ENCODE measurements at regions of chr4 and their contacts with region 1.

Region 1: GRCh38 chr4:120922381-120923206 is at the start of gene PRDM5:
- DNase-seq: peak; percentile 80
- ATAC-seq: peak; percentile 83
- total RNA-seq, gene PRDM5: 7.4 TPM

Region 2: GRCh38 chr4:121072224-121073003 is 149.8 kb after region 1 on chr4 and contains the start of gene NDNF:
- intact Hi-C with region 1: loop called (anchors 5 kb)
- DNase-seq: peak; percentile 72
- ATAC-seq: peak; percentile 86
- total RNA-seq, gene NDNF: 8.1 TPM

Measured in Right ventricle myocardium inferior (tissue), 1 donor.